BJ (cell line): ENCODE measurements at regions of chr7 and their contacts with region 1.

Region 1: DNA sequence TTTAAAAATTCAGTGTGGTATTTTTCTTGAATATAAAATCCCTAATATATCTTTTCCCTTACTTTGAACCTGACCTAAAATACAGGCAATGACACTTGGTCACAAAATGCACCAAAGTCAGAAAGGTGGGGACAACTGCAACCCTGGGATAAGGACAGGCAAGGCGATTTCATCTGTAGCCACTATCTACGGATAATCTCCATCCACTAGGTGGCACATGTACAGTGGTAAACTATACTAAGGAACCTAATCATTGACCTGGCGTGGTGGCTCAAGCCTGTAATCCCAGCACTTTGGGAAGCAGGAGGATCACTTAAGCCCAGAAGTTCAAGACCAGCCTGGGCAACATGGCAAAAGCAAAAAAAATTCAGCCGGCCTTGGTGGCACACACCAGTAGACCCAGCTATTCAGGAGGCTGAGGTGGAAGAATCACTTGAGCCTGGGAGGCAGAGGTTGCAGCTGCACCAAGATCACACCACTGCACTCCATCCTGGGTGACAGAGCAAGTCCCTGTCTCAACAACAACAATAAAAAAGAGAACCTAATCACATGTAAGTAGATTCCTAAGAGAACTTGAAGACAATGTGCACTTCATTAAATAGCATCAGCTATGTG is 98.9 kb downstream of the KMT2C start:
- DNase-seq: no peak
- H3K4me3 ChIP-seq: no peak overlapping the region
- H3K27me3 ChIP-seq: no peaks in the 10 kb centered on the region
- CTCF ChIP-seq: peak; percentile 53

Region 2: DNA sequence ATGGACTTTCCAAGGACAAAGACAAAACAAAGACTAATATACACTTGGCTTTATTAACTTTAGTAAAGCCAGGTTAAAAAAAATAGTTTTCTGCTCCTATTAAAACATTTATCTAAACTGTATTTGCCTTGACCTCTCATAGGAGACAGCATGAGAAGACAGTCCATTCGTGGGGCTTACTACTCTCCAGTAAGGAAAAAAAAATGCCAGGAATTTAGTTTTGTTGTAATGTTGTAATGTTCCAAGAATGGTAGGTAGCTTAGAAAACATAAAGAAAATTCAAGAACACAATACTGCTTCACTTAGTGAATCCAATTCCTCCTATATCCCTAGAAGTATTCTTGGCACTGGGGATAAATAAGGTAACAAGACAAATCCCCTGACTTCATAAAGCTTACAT is 17.2 kb after region 1 on chr7:
- CTCF ChIA-PET with region 1: interaction called, 21 read pairs
- POLR2A ChIA-PET with region 1: no interaction called
- DNase-seq: no peak
- H3K4me3 ChIP-seq: no peak overlapping the region
- H3K27me3 ChIP-seq: no peaks in the 10 kb centered on the region
- CTCF ChIP-seq: no peak

Region 3: GRCh38 chr7:152366662-152367061 is 29.8 kb after region 1 on chr7:
- CTCF ChIA-PET with region 1: no interaction called
- POLR2A ChIA-PET with region 1: no interaction called
- DNase-seq: no peak
- H3K4me3 ChIP-seq: no peak overlapping the region
- H3K27me3 ChIP-seq: no peaks in the 10 kb centered on the region
- CTCF ChIP-seq: no peak

Region 4: GRCh38 chr7:152709287-152710152 is 372.7 kb after region 1 on chr7:
- CTCF ChIA-PET with region 1: interaction called, 14 read pairs
- POLR2A ChIA-PET with region 1: no interaction called
- DNase-seq: no peak
- H3K4me3 ChIP-seq: no peak overlapping the region
- H3K27me3 ChIP-seq: no peaks in the 10 kb centered on the region
- CTCF ChIP-seq: no peak